Ascending aorta (tissue), 2 donors: ENCODE measurements at regions of chr2 and their contacts with region 1.

Region 1: GRCh38 chr2:197804049-197804757 is at the start of gene PLCL1:
- DNase-seq: peak; percentile 89 to 97
- H3K4me3 ChIP-seq: peak within 1 kb of the TSS; percentile 70 to 99
- H3K27ac ChIP-seq: peak within 1 kb of the TSS; percentile 87 to 96
- H3K4me1 ChIP-seq: peaks cover under 1 to 9% of the 10 kb centered on the region in 2 donors
- H3K27me3 ChIP-seq: no peaks in the 10 kb centered on the region
- CTCF ChIP-seq: no peak
- total RNA-seq, gene PLCL1: 14.3 TPM

Region 2: DNA sequence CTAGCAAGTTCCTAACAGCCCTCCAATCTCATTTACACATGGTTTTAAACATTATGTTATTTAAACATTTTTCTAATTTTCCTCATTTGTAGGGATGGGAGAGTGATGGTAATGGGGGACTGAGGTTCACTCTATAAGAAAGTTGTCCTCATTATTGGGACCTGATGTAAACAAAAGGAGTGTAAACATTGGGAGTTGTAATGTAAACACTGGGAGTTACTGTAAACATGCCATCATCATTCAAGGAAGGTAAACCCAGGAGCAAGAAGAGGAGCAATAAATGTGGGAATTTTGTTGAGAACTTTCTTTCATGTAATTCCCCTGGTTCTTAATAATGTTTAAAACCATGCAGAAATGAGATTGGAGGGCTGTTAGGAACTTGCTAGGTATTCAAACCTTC is 146.6 kb before region 1 on chr2:
- intact Hi-C with region 1: no loop called
- DNase-seq: no peak
- H3K4me3 ChIP-seq: no peak overlapping the region
- H3K27ac ChIP-seq: no peak overlapping the region
- H3K4me1 ChIP-seq: no peaks in the 10 kb centered on the region
- H3K27me3 ChIP-seq: no peaks in the 10 kb centered on the region
- CTCF ChIP-seq: no peak

Region 3: GRCh38 chr2:197878792-197879191 is 74.6 kb after region 1 on chr2:
- intact Hi-C with region 1: loop called (anchors 5 kb)
- DNase-seq: no peak
- H3K4me3 ChIP-seq: no peak overlapping the region
- H3K27ac ChIP-seq: peak overlapping the region in 1 of 2 donors; percentile 10
- H3K4me1 ChIP-seq: peaks cover 3 to 36% of the 10 kb centered on the region in 2 donors
- H3K27me3 ChIP-seq: no peaks in the 10 kb centered on the region
- CTCF ChIP-seq: no peak

Region 4: DNA sequence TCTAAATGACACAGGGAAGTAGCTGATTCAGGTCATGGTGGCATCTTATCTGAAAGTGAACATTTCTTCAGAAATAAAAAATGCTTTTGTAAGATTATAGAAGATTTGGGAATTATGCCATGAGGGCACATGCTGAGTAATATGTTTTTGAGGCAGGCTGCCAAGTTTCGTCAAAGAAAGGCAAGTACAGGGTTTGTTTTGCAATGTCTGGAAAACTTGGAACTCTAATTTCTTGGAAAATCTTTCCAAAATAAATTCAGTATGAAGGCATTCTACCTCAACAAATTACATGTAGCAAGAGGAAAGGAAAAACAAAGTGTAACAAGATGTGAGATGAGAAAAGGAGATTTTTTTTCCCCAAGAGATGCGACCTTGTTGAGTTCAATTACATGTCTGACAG is 167.9 kb after region 1 on chr2:
- intact Hi-C with region 1: loop called (anchors 1 kb)
- DNase-seq: peak in 1 of 2 donors; percentile 87
- H3K4me3 ChIP-seq: no peak overlapping the region
- H3K27ac ChIP-seq: peak overlapping the region; percentile 3 to 43
- H3K4me1 ChIP-seq: peaks cover 15 to 35% of the 10 kb centered on the region in 2 donors
- H3K27me3 ChIP-seq: no peaks in the 10 kb centered on the region
- CTCF ChIP-seq: no peak

Region 5: DNA sequence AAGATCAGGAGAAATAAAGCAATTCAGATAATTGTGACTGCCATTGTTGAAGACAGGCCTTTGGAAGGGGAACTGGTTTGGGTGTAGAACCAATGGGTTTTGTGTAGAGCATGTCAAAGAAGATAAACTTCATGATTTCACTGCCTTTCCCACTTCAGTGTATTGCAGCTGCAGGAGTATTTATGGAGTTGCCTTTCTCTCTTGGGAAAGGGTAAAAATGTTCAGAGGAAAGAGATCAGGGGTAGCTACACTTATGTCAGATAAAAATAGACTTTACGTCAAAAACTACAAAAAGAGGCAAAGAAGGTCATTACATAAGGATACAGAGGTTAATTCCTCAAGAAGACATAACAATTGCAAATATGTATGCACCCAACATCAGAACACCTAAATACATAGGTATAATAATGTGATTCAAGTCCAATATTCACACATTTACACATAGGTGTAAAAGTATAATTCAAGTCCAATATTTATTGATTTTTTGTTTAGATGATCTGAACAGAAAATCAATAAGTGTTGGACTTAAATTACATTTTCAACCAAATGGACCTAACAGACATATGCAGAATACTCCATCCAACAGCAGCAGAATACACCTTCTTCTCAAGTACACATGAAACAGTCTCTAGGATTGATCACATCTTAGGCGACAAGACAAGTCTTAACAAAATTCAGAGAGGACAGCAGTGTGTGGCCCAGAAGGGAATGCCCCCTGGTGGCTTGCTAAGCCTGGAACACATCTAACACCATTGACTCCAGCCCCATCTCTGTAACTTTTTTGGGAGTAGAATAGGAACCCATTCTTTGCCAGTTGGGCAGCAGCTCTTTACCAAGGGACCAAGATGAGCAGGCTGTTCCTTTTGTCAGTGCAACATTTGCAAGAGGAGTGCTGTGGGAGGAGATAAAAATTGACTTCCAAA is 249.8 kb after region 1 on chr2:
- intact Hi-C with region 1: loop called (anchors 5 kb)
- DNase-seq: no peak
- H3K4me3 ChIP-seq: no peak overlapping the region
- H3K27ac ChIP-seq: no peak overlapping the region
- H3K4me1 ChIP-seq: peaks cover 0 to 12% of the 10 kb centered on the region in 2 donors
- H3K27me3 ChIP-seq: no peaks in the 10 kb centered on the region
- CTCF ChIP-seq: peak in 2 of 3 experiments; percentile 24 to 32

Region 6: GRCh38 chr2:198077477-198077876 is 273.3 kb after region 1 on chr2:
- intact Hi-C with region 1: loop called (anchors 2 kb)
- DNase-seq: peak in 1 of 2 donors; percentile 76
- H3K4me3 ChIP-seq: no peak overlapping the region
- H3K27ac ChIP-seq: peak overlapping the region; percentile 53 to 64
- H3K4me1 ChIP-seq: peaks cover 0 to 9% of the 10 kb centered on the region in 2 donors
- H3K27me3 ChIP-seq: no peaks in the 10 kb centered on the region
- CTCF ChIP-seq: no peak

Region 7: GRCh38 chr2:198127627-198128026 is 323.4 kb after region 1 on chr2:
- intact Hi-C with region 1: loop called (anchors 1 kb)
- DNase-seq: no peak
- H3K4me3 ChIP-seq: no peak overlapping the region
- H3K27ac ChIP-seq: no peak overlapping the region
- H3K4me1 ChIP-seq: peaks cover 0 to 6% of the 10 kb centered on the region in 2 donors
- H3K27me3 ChIP-seq: no peaks in the 10 kb centered on the region
- CTCF ChIP-seq: peak; percentile 58 to 74 (median 62)

Region 8: GRCh38 chr2:198296665-198297308 is 492.6 kb after region 1 on chr2:
- intact Hi-C with region 1: loop called (anchors 1 kb)
- DNase-seq: peak in 1 of 2 donors; percentile 71
- H3K4me3 ChIP-seq: no peak overlapping the region
- H3K27ac ChIP-seq: no peak overlapping the region
- H3K4me1 ChIP-seq: no peaks in the 10 kb centered on the region
- H3K27me3 ChIP-seq: no peaks in the 10 kb centered on the region
- CTCF ChIP-seq: peak; percentile 60 to 88 (median 77)